Transverse colon (tissue), 4 donors: ENCODE measurements at regions of chr17 and their contacts with region 1.

Region 1: DNA sequence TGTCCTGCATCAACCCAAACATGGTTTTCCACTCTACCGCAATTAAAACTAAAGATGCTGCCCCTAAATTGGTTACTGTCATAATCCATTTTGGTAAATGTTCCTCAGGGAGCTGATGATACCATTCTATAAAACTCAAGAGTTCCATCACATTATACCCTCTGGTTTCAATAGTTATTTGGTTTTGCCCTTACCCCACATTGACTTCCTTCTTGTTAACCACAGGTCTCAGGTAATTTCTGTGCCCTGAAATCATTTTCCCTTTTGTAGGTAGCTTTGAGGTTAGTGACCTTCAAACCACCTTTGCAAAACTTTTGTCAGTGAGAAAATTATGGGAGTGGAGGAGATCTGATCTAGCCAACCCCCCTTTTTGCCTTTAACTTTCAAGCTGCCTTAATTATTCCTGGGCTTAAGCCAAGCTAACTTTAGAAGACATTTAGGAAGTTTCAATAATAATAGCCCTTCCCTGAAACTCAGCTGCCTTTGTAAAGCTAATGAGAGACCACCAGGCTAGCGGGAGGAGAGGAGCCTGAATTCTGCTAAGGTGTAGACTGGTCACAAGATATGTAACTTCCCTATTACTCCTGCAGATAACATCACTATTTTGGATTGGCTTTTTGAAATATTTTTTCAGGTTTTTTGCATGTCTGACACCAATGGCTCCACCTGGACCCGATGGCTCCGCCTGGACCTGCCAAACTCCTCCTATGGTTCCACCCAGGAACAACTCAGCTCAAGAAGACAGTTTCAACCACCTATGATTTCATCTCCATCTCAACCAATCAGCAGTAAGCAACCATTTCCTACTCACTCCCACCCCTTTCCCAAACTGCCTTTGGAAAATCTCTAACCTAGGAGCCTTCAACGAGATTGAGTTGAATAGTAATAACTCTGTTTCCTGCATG is 224.9 kb downstream of the HS3ST3B1 start:
- DNase-seq: no peak
- H3K4me3 ChIP-seq: no peak overlapping the region
- H3K27ac ChIP-seq: no peak overlapping the region
- H3K4me1 ChIP-seq: no peaks in the 10 kb centered on the region
- H3K27me3 ChIP-seq: no peaks in the 10 kb centered on the region
- CTCF ChIP-seq: no peak
- EP300 ChIP-seq: no peak
- POLR2A ChIP-seq: no peak

Region 2: GRCh38 chr17:13626703-13627102 is 899.1 kb before region 1 on chr17:
- in situ Hi-C with region 1: no loop called
- intact Hi-C with region 1: loop called (anchors 5 kb)
- DNase-seq: no peak
- H3K4me3 ChIP-seq: no peak overlapping the region
- H3K27ac ChIP-seq: no peak overlapping the region
- H3K4me1 ChIP-seq: no peaks in the 10 kb centered on the region
- H3K27me3 ChIP-seq: no peaks in the 10 kb centered on the region
- CTCF ChIP-seq: no peak
- EP300 ChIP-seq: no peak
- POLR2A ChIP-seq: no peak

Region 3: DNA sequence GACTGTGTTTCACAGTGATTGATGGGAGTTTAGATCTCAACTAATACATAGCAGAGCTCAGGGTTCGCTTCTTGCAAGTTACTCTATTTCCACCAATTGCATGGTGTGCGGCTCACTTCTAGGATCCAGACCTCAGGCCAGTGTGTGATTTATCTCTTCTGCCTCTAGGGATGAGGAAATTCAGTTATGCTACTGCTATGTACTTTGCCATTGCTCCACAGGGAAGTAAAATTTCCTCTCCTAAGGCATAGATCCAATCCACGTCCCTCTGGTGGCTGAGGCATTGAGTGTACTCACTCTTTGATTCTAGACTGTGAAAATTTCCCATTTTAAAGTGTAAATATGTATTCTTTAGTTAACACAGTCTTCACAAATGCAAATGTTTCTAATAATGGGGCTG is 10.8 kb before region 1 on chr17:
- in situ Hi-C with region 1: no loop called
- intact Hi-C with region 1: loop called (anchors 1 kb)
- DNase-seq: no peak
- H3K4me3 ChIP-seq: no peak overlapping the region
- H3K27ac ChIP-seq: no peak overlapping the region
- H3K4me1 ChIP-seq: no peaks in the 10 kb centered on the region
- H3K27me3 ChIP-seq: no peaks in the 10 kb centered on the region
- CTCF ChIP-seq: no peak
- EP300 ChIP-seq: no peak
- POLR2A ChIP-seq: no peak